ENCODE measurements at regions of chr21 and their contacts with region 1.

Region 1: DNA sequence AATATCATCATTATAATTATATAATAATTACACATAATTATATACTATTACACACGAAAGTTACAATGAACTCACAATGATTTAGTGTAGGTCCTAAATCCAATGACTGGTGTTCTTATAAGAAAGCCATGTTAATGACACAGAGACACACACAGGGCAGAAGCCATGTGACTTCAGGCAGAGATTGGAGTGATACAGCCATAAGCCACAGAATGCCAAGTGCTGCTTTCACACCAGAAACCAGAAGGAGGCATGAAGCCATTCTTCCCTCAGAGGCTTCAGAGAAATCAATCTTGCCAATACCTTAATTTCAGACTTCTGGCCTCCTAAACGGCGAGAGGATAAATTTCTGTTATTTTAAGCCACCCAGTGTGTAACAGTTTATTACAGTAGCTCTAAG is 147.4 kb upstream of the KRTAP19-8 start:
- DNase-seq: peak; percentile 48
- H3K4me3 Mint-ChIP-seq: peak overlapping the region; percentile 67
- H3K27ac Mint-ChIP-seq: peak overlapping the region; percentile 85
- H3K4me1 Mint-ChIP-seq: peaks cover 78% of the 10 kb centered on the region
- H3K27me3 Mint-ChIP-seq: no peaks in the 10 kb centered on the region

Region 2: DNA sequence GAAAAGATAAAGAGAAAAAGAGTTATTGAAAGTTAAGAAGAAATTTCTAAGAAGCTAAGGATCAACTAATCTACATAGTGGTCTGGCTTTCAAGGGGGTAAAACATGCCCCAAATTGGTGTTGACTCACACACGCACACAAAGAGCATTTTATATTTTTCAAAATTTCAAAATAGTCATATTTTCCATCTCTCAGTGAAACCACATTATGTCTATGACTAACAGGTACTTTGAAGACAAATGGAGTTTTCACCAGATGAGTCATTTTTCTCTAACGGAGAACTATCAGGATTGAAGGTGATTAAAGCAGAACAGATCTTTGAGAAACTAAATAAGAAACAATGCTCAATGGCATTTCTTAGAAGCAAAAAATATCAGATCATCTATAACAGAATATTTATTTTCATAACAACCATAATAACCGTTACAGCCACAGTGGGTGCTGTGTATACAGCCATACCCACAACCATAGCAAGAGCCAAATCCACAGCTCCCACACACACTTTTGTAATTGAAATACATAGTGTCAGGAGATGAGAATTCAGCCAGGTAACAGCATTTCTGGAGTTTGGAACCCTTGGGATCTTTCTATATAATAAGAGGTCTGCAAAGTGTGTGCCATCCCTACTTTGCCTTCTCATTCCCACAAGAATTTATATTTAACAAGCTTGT is 467.3 kb before region 1 on chr21 and contains the start of gene KRTAP21-3:
- CTCF ChIA-PET with region 1: no interaction called
- POLR2A ChIA-PET with region 1: no interaction called
- intact Hi-C with region 1: loop called (anchors 2 kb)
- DNase-seq: peak; percentile 38
- H3K4me3 Mint-ChIP-seq: no peak within 1 kb of the TSS
- H3K27ac Mint-ChIP-seq: peak within 1 kb of the TSS; percentile 28
- H3K4me1 Mint-ChIP-seq: peaks cover 23% of the 10 kb centered on the region
- H3K27me3 Mint-ChIP-seq: no peaks in the 10 kb centered on the region
- total RNA-seq, gene KRTAP21-3: not detected

Region 3: GRCh38 chr21:31161157-31161556 is 24.5 kb before region 1 on chr21:
- CTCF ChIA-PET with region 1: interaction called, 13 read pairs
- POLR2A ChIA-PET with region 1: interaction called, 11 read pairs
- intact Hi-C with region 1: loop called (anchors 2 kb)
- DNase-seq: peak; percentile 58
- H3K4me3 Mint-ChIP-seq: peak overlapping the region; percentile 53
- H3K27ac Mint-ChIP-seq: peak overlapping the region; percentile 77
- H3K4me1 Mint-ChIP-seq: peaks cover 84% of the 10 kb centered on the region
- H3K27me3 Mint-ChIP-seq: no peaks in the 10 kb centered on the region

Region 4: GRCh38 chr21:31786164-31786920 is 600.7 kb after region 1 on chr21:
- CTCF ChIA-PET with region 1: no interaction called
- POLR2A ChIA-PET with region 1: no interaction called
- intact Hi-C with region 1: no loop called
- DNase-seq: no peak
- H3K4me3 Mint-ChIP-seq: no peak overlapping the region
- H3K27ac Mint-ChIP-seq: no peak overlapping the region
- H3K4me1 Mint-ChIP-seq: no peaks in the 10 kb centered on the region
- H3K27me3 Mint-ChIP-seq: peaks cover 10% of the 10 kb centered on the region

Measured in activated CD4-positive, alpha-beta memory T cell treated with anti-CD3 and anti-CD28 coated beads for 36 hours (primary cell).